Dendritic cell treated with granulocyte-macrophage colony-stimulating factor and Interleukin-4, amounts not matched to agents 40 ng/mL and 50 ng/mL, for 4 days (primary cell): ENCODE measurements at regions of chr2 and their contacts with region 1.

Region 1: DNA sequence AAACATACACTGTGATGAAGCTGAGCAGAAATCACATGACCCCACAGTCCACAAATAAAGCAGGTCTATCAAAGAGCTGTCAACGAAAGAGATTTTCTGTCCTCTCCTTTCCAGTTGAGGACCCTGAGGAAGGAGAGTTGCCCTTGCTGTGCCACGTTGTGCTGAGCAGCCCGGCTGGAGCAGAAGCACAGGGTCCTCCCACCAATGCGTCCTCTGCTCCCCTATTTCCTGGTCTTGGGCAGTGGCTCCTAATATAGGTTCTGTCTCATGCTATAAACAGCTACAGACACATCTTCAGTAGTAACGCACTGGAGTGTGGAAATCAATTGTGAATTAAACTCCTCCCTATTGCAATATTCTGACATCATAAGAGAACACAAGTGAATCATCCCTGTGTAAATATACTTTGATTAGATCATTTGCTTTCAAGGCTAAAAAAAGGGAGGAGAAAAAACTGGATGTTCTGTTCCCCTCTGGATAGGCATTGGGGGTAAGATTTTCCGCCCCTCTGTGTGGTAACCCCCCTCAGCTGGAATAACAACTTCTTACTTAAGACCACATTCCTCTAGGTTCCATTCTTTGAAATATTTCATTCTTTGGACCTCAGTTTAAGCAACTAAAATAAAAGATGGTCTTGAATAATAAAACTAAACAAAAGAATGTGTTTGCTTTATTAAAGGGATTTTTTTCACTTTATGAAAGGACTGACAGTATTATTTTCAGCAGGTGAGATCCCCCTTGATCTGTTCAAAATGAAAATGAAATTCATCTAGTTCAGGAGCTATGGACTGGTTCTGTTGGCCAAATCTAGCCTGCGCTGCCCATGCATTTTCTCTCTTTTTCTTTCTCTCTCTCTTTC is 8.3 kb upstream of the RHOB start:
- H3K4me3 Mint-ChIP-seq: no peak overlapping the region
- H3K27ac Mint-ChIP-seq: peak overlapping the region; percentile 96
- H3K4me1 Mint-ChIP-seq: peaks cover 50% of the 10 kb centered on the region
- H3K27me3 Mint-ChIP-seq: no peaks in the 10 kb centered on the region

Region 2: GRCh38 chr2:20411361-20411894 is 27.1 kb before region 1 on chr2:
- intact Hi-C with region 1: loop called (anchors 2 kb)
- H3K4me3 Mint-ChIP-seq: no peak overlapping the region
- H3K27ac Mint-ChIP-seq: peak overlapping the region; percentile 57
- H3K4me1 Mint-ChIP-seq: peaks cover 30% of the 10 kb centered on the region
- H3K27me3 Mint-ChIP-seq: peaks cover 2% of the 10 kb centered on the region

Region 3: GRCh38 chr2:20424300-20425290 is 14.0 kb before region 1 on chr2:
- intact Hi-C with region 1: loop called (anchors 2 kb)
- H3K4me3 Mint-ChIP-seq: peak overlapping the region; percentile 77
- H3K27ac Mint-ChIP-seq: peak overlapping the region; percentile 99
- H3K4me1 Mint-ChIP-seq: peaks cover 88% of the 10 kb centered on the region
- H3K27me3 Mint-ChIP-seq: no peaks in the 10 kb centered on the region